ENCODE measurements at regions of chr4 and their contacts with region 1.

Region 1: DNA sequence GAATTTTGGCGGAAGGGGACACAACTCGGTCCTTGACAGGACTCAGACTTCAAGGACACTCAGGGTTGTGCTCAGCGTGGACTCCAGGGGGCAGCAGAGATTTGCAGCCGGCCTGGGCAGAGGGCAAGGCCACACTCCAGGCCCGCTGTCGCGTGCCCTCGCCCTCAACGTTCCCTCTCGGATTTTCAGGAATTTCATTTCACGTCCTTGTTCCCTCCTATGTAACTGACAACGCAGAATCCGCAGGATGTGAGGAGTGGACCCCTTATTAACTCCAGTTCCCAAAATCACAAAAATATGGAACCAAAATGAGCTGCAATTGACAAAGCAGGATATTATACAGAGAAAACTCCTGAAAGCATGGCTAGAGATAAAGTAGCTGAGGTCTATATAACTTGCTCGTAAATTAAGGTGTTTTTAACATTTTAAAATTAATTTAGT is 21.0 kb upstream of the DCTD start:
- DNase-seq: peak; percentile 70 to 82 (median 73)
- H3K4me3 ChIP-seq: no peak overlapping the region
- H3K27ac ChIP-seq: no peak overlapping the region
- H3K4me1 ChIP-seq: peaks cover 0 to 2% (median 0%) of the 10 kb centered on the region in 3 donors
- H3K27me3 ChIP-seq: peaks cover 3% of the 10 kb centered on the region
- CTCF ChIP-seq: peak; percentile 93

Region 2: DNA sequence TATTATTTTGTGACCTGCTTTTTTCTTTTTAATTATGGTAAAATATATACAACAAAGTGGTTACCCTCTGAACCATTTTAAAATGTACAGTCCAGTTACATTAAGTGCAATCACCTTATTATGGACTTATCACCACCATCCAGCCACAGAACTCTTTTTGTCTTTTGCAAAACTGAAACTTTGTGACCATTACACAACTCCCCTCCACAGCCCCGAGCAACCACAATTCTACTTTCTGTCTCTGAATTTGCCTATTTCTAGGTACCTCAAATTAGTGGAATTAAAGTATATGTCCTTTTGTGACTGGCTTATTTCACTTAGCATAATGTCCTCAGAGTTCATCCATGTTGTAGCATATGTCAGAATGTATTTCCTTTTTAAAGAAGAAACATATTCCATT is 121.6 kb after region 1 on chr4:
- intact Hi-C with region 1: loop called (anchors 10 kb)
- DNase-seq: no peak
- H3K4me3 ChIP-seq: no peak overlapping the region
- H3K27ac ChIP-seq: no peak overlapping the region
- H3K4me1 ChIP-seq: no peaks in the 10 kb centered on the region
- H3K27me3 ChIP-seq: no peaks in the 10 kb centered on the region
- CTCF ChIP-seq: no peak

Region 3: DNA sequence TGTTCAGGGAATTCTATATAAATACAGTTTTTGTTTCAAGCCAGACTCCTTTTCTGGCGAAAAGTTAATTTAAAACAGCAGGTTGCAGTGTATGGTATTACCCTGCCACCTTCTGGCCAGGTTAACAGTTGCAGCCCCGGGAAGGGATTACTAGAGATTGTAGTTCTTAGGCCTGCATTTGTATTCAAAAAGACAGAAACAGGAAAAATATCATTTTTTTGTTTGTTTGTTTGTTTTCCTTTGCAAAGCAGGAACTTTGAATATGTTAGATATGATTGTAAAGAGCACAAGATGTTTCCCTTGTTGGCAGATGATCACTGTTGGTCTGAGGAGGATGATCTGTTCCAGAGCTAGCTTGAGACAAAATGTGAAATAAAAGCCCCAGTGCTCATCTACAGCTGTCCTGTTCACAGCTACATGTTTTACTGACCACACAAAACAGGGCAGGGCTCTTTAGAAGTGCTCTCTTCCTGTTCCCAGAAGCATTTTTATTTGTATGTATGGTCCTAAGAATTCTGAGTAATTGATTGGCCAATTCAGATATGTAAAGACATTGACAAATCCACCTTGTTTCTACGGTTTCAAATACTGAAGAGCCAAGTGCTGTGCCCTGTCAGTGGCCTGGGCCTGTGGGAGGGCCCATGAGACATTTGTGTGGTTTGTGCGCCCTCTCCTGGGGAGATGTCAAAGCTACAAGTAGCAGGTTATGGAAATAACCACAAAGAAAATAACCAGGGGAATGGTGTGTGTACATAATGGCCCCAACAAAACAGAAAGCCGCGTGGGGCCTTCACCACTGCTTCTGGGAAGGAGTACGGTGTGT is 323.9 kb after region 1 on chr4:
- intact Hi-C with region 1: loop called (anchors 5 kb)
- DNase-seq: peak; percentile 81 to 89 (median 85)
- H3K4me3 ChIP-seq: no peak overlapping the region
- H3K27ac ChIP-seq: peak overlapping the region in 1 of 2 donors; percentile 57
- H3K4me1 ChIP-seq: peaks cover 0 to 8% (median 4%) of the 10 kb centered on the region in 3 donors
- H3K27me3 ChIP-seq: no peaks in the 10 kb centered on the region
- CTCF ChIP-seq: peak; percentile 92

Measured in kidney (tissue), 22 donors.